ENCODE measurements at regions of chr17 and their contacts with region 1.

Region 1: DNA sequence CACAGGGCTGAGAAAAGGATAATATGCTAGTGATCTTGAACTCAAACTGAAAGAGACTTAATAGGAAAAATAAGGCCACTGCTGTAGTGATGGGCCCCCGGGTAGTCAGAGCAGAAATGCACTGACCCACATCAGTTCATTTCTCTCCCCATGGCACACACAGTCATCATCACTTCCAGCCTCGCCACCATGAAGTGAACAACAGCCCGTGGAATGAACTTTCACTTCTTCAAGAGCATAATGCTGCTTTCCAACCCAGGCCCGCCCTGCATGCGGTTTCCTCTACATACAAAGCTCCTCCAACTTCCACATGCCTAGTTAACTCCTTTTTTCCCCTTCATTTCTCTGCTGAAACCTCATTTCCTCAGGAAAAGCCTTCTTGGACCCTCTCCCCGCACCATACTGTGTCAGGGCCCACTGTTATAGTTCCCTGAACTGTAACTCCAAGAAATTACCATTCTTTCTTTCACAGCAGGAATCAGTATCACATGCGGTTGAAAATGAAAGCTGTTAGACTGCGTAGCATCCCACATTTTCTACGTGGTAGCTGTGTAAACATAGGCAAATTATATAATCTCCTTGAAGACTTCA is 65.8 kb upstream of the SMIM36 start:
- DNase-seq: peak; percentile 14
- H3K4me3 Mint-ChIP-seq: no peak overlapping the region
- H3K27ac Mint-ChIP-seq: no peak overlapping the region
- H3K4me1 Mint-ChIP-seq: peaks cover 5% of the 10 kb centered on the region
- H3K27me3 Mint-ChIP-seq: peaks cover 17% of the 10 kb centered on the region

Region 2: GRCh38 chr17:55341432-55341831 is 235.7 kb before region 1 on chr17:
- intact Hi-C with region 1: loop called (anchors 5 kb)
- DNase-seq: no peak
- H3K4me3 Mint-ChIP-seq: no peak overlapping the region
- H3K27ac Mint-ChIP-seq: no peak overlapping the region
- H3K4me1 Mint-ChIP-seq: peaks cover 46% of the 10 kb centered on the region
- H3K27me3 Mint-ChIP-seq: peaks cover 28% of the 10 kb centered on the region

Region 3: DNA sequence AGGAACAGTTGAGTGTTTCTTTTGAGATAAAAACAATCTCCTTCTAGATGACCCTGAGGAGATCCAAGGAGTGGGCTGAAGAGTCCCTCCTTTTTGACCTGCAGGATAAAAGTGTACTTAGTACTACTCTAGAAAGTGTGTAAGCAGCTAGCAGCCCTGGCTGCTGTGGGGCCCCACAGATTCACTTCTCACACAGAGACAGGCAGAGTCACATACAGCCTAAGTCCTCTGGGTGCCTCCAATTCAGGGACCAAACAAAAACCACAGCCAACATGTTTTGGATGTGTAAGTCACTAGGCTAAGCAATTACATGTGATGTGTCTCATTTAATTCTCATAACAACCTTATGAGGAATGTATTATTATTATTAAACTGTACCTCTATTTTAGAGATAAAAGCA is 48.4 kb after region 1 on chr17:
- intact Hi-C with region 1: loop called (anchors 2 kb)
- DNase-seq: no peak
- H3K4me3 Mint-ChIP-seq: no peak overlapping the region
- H3K27ac Mint-ChIP-seq: peak overlapping the region; percentile 38
- H3K4me1 Mint-ChIP-seq: peaks cover 17% of the 10 kb centered on the region
- H3K27me3 Mint-ChIP-seq: peaks cover 16% of the 10 kb centered on the region

Region 4: DNA sequence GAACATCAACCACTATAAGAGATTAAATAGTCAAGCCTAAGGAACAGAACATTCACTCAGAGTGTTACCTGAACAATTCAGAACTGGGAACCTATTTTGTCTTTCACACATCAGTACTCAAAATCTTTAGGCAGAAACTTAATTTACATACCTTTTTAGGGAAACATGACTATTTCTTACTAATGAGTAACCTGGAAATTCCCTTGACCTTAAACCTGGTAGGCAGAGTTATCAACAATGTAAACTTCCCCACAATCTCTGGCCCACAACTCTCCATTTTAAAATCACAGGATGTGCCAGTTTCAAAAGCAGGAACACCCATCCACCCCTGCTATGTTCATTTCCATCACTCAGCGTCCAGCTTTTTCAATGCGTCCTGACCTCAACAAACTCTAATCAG is 443.3 kb after region 1 on chr17:
- intact Hi-C with region 1: loop called (anchors 1 kb)
- DNase-seq: no peak
- H3K4me3 Mint-ChIP-seq: no peak overlapping the region
- H3K27ac Mint-ChIP-seq: peak overlapping the region; percentile 27
- H3K4me1 Mint-ChIP-seq: peaks cover 30% of the 10 kb centered on the region
- H3K27me3 Mint-ChIP-seq: peaks cover 2% of the 10 kb centered on the region

Measured in activated T-helper 1 cell treated with anti-CD3 and anti-CD28 coated beads, Interleukin-12 subunit alpha, Interleukin-12 subunit beta, Interleukin-2, Interleukin-4 antibody, amounts not matched to agents 30 ng/mL and 10 ng/mL and 1 ng/mL, durations not matched to agents 14 hours and 24 hours and 36 hours (primary cell).